GM12878 (cell line): ENCODE measurements at regions of chr9 and their contacts with region 1.

Region 1: GRCh38 chr9:38713426-38713825 is 6.5 kb downstream of the FAM240B start:
- DNase-seq: no peak
- ATAC-seq: no peak
- H3K4me3 ChIP-seq: no peak overlapping the region
- H3K27ac ChIP-seq: no peak overlapping the region
- H3K4me1 ChIP-seq: no peaks in the 10 kb centered on the region
- H3K27me3 ChIP-seq: no peaks in the 10 kb centered on the region
- CTCF ChIP-seq: no peak
- EP300 ChIP-seq: no peak
- POLR2A ChIP-seq: no peak
- RAD21 ChIP-seq: no peak

Region 2: GRCh38 chr9:38756702-38757101 is 43.3 kb after region 1 on chr9:
- CTCF ChIA-PET with region 1: no interaction called
- POLR2A ChIA-PET with region 1: no interaction called
- RAD21 ChIA-PET with region 1: no interaction called
- SMC1A ChIA-PET with region 1: no interaction called
- in situ Hi-C with region 1: no loop called
- intact Hi-C with region 1: loop called (anchors 5 kb)
- DNase-seq: no peak
- ATAC-seq: no peak
- H3K4me3 ChIP-seq: no peak overlapping the region
- H3K27ac ChIP-seq: no peak overlapping the region
- H3K4me1 ChIP-seq: no peaks in the 10 kb centered on the region
- H3K27me3 ChIP-seq: no peaks in the 10 kb centered on the region
- CTCF ChIP-seq: no peak
- EP300 ChIP-seq: no peak
- POLR2A ChIP-seq: no peak
- RAD21 ChIP-seq: no peak